Activated naive CD4-positive, alpha-beta T cell treated with anti-CD3 and anti-CD28 coated beads, Interleukin-2, amount 10 ng/mL, durations not matched to agents 7 days and 5 days (primary cell): ENCODE measurements at regions of chr15 and their contacts with region 1.

Region 1: DNA sequence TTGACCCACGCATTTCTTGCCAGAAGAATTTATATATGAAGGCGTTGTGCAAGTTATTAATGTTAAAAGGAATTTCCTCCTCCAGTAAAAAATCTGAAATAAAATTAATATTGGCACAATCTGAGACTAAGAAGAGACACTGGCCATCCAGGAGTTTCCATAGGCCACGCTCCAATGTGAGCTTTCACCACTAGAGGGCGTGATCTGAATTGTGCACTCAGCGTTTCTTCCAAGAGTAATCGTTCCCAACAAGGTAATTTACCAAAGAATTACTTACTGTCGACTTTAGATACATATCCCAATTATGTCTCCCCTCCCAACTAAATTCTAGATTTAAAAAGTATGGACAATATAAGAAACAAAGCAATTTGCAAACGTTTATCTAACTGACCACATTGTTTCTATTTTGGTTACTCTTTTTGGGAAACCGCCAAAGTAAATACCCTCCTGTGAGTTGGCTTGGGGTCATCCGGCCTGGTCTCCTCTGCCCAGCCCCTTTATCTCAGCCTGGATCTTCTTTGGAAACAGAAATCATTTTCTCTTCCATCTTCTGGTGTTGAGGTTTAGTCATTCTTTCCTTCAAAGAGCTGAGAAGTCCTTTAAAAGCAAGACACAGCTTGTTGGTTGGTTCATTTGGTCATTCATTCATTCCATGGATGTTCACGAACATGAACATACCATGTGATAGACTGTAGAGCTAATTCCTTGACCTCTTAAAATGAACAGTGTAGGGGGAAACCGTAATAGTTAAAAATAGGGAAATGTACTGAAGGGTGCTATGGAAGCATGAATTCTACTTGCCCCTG is 26.2 kb downstream of the POLR2M start:
- DNase-seq: peak; percentile 66
- H3K4me3 Mint-ChIP-seq: no peak overlapping the region
- H3K27ac Mint-ChIP-seq: no peak overlapping the region
- H3K4me1 Mint-ChIP-seq: peaks cover 7% of the 10 kb centered on the region
- H3K27me3 Mint-ChIP-seq: no peaks in the 10 kb centered on the region

Region 2: DNA sequence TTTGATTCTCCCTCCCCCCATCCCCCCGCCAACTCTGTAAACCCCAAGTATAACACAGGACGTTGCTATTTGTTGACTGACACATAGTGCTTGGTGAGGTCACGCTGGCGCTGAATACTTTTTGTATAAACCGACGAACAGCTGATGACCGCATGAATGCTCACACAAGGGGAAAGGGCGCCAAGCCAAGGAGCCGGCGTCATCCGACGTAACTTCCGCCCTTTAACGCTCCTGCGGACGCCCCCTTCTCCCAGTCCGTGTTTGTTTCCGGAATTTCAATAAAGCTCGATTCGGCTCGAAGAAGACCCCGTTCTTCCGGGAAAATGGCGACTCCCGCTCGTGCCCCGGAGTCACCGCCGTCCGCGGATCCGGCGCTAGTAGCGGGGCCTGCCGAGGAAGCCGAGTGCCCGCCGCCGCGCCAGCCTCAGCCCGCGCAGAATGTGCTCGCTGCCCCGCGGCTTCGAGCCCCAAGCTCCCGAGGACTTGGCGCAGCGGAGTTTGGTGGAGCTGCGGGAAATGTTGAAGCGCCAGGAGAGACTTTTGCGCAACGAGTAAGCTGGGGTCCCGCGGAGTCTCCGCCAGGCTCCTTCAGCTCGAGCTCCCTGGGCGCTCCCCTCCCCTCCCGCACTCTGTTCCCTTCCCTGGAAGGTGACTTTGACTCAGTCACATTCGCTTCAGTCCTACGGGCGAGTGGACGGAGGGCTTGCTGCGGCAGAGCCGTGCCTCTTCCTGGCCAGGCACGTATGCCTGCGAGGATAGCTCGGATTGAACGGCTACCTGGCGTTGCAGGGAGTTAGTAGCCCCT is 26.1 kb before region 1 on chr15 and contains the start of gene POLR2M:
- CTCF ChIA-PET with region 1: interaction called, 14 read pairs
- DNase-seq: peak; percentile 93
- H3K4me3 Mint-ChIP-seq: peak within 1 kb of the TSS; percentile 83
- H3K27ac Mint-ChIP-seq: peak within 1 kb of the TSS; percentile 83
- H3K4me1 Mint-ChIP-seq: peaks cover 86% of the 10 kb centered on the region
- H3K27me3 Mint-ChIP-seq: no peaks in the 10 kb centered on the region